ENCODE measurements at regions of chr9 and their contacts with region 1.

Region 1: GRCh38 chr9:113578882-113579282 is 115.4 kb downstream of the RGS3 start:
- DNase-seq: peak; percentile 90
- H3K4me3 ChIP-seq: peak overlapping the region; percentile 52
- H3K27ac ChIP-seq: peak overlapping the region; percentile 96
- H3K4me1 ChIP-seq: peaks cover 92% of the 10 kb centered on the region
- CTCF ChIP-seq: no peak

Region 2: GRCh38 chr9:113221003-113221799 is 357.7 kb before region 1 on chr9 and contains the starts of genes FKBP15 and SLC31A1:
- CTCF ChIA-PET with region 1: no interaction called
- POLR2A ChIA-PET with region 1: interaction called, 4 read pairs
- intact Hi-C with region 1: loop called (anchors 2 kb)
- DNase-seq: peak; percentile 98
- H3K4me3 ChIP-seq: peak within 1 kb of the TSS; percentile 92
- H3K27ac ChIP-seq: peak within 1 kb of the TSS; percentile 89
- H3K4me1 ChIP-seq: peaks cover 40% of the 10 kb centered on the region
- CTCF ChIP-seq: no peak
- total RNA-seq, gene FKBP15: 25.5 and 39.9 TPM in 2 replicates
- total RNA-seq, gene SLC31A1: 3.9 and 4.7 TPM in 2 replicates

Region 3: GRCh38 chr9:113309204-113309813 is 269.6 kb before region 1 on chr9:
- CTCF ChIA-PET with region 1: interaction called, 3 read pairs
- POLR2A ChIA-PET with region 1: no interaction called
- intact Hi-C with region 1: loop called (anchors 10 kb)
- DNase-seq: peak; percentile 44
- H3K4me3 ChIP-seq: no peak overlapping the region
- H3K27ac ChIP-seq: no peak overlapping the region
- H3K4me1 ChIP-seq: no peaks in the 10 kb centered on the region
- CTCF ChIP-seq: peak; percentile 95

Region 4: DNA sequence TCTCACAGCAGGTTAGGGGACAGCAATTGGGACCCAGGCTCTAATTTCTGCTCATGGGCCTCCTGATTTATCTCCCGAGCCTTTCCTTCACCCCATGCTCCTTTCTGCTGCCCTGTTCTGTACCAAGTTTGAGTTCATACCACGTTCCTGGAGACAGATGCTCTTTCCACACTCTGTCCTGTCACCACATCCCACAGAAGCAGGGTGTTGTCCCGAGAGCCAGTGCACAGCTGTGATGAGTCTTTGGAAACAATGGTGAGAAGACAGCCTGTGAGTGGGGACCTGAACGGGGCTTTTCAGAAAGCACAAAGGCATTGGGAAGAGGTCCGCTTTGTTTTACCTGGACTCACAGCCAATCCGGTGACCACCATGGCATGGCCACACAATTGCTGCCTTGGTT is 256.2 kb before region 1 on chr9:
- CTCF ChIA-PET with region 1: no interaction called
- POLR2A ChIA-PET with region 1: no interaction called
- intact Hi-C with region 1: no loop called
- DNase-seq: no peak
- H3K4me3 ChIP-seq: no peak overlapping the region
- H3K27ac ChIP-seq: no peak overlapping the region
- H3K4me1 ChIP-seq: no peaks in the 10 kb centered on the region
- CTCF ChIP-seq: no peak

Region 5: DNA sequence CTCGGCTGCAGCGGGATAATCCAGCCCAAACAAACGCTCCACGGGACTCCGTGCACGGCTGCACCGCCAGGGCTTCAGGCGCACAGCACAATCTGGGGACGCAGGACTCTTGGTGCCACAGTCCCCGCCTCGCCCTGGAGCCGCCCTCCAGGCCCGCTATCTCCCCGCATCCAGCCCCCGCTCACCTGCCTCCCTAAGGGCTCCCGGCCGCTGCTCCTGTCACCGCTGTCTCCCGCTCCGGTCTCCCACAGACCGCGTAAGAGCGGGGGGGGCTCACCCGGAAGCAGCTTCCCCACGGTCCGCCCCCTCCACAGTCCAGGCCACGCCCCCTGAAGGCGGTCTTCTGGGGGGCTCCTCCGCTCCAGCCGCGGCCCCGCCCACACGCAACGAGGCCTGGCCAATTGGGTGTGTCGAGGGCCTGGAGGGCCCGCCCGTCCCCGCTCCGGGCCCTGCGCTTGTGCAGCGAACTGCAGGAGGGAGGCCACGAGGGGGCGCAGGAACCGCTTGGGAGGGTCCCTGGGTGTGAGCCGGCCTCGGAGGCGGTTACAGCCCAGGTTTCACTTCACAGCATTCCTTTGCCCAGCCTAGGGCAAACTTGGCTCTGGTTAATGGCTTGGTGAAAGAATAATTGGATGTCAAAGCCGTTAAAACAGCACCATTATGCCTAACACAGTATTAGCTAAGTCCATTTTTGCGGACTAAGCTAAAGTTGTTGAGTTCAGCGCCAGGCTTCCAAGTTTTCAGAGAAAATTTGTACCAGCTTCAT is 177.7 kb before region 1 on chr9 and contains the start of gene ALAD:
- CTCF ChIA-PET with region 1: interaction called, 6 read pairs
- POLR2A ChIA-PET with region 1: interaction called, 5 read pairs
- intact Hi-C with region 1: loop called (anchors 1 kb)
- DNase-seq: peak; percentile 99
- H3K4me3 ChIP-seq: peak within 1 kb of the TSS; percentile 92
- H3K27ac ChIP-seq: peak within 1 kb of the TSS; percentile 12
- H3K4me1 ChIP-seq: peaks cover 12% of the 10 kb centered on the region
- CTCF ChIP-seq: peak; percentile 91
- total RNA-seq, gene ALAD: 14.3 and 19.8 TPM in 2 replicates

Region 6: GRCh38 chr9:113446323-113446740 is 132.6 kb before region 1 on chr9:
- CTCF ChIA-PET with region 1: interaction called, 18 read pairs
- POLR2A ChIA-PET with region 1: interaction called, 10 read pairs
- intact Hi-C with region 1: loop called (anchors 1 kb)
- DNase-seq: peak; percentile 68
- H3K4me3 ChIP-seq: no peak overlapping the region
- H3K27ac ChIP-seq: no peak overlapping the region
- H3K4me1 ChIP-seq: peaks cover 5% of the 10 kb centered on the region
- CTCF ChIP-seq: peak; percentile 98

Region 7: GRCh38 chr9:113523421-113524236 is 55.3 kb before region 1 on chr9:
- CTCF ChIA-PET with region 1: interaction called, 8 read pairs
- POLR2A ChIA-PET with region 1: interaction called, 61 read pairs
- intact Hi-C with region 1: loop called (anchors 1 kb)
- DNase-seq: peak; percentile 73
- H3K4me3 ChIP-seq: peak overlapping the region; percentile 57
- H3K27ac ChIP-seq: peak overlapping the region; percentile 77
- H3K4me1 ChIP-seq: peaks cover 65% of the 10 kb centered on the region
- CTCF ChIP-seq: no peak

Measured in OCI-LY7 (cell line).